MCF 10A (cell line): ENCODE measurements at regions of chr5 and their contacts with region 1.

Region 1: GRCh38 chr5:178786859-178787760 is 56.7 kb upstream of the ZNF354A start:
- DNase-seq: peak; percentile 96
- H3K4me3 Mint-ChIP-seq: peak overlapping the region; percentile 54
- H3K27ac Mint-ChIP-seq: peak overlapping the region; percentile 92
- H3K4me1 Mint-ChIP-seq: peaks cover 58% of the 10 kb centered on the region
- H3K27me3 Mint-ChIP-seq: no peaks in the 10 kb centered on the region
- CTCF ChIP-seq: peak; percentile 31

Region 2: GRCh38 chr5:178232124-178232919 is 554.8 kb before region 1 on chr5 and contains the start of gene PHYKPL:
- CTCF ChIA-PET with region 1: interaction called, 4 read pairs
- POLR2A ChIA-PET with region 1: no interaction called
- intact Hi-C with region 1: loop called (anchors 5 kb)
- DNase-seq: peak; percentile 84
- H3K4me3 Mint-ChIP-seq: peak within 1 kb of the TSS; percentile 80
- H3K27ac Mint-ChIP-seq: peak within 1 kb of the TSS; percentile 84
- H3K4me1 Mint-ChIP-seq: peaks cover 57% of the 10 kb centered on the region
- H3K27me3 Mint-ChIP-seq: no peaks in the 10 kb centered on the region
- CTCF ChIP-seq: no peak
- total RNA-seq, gene PHYKPL: 112 and 115 TPM in 2 replicates

Region 3: GRCh38 chr5:178677429-178677828 is 109.7 kb before region 1 on chr5:
- CTCF ChIA-PET with region 1: interaction called, 3 read pairs
- POLR2A ChIA-PET with region 1: interaction called, 10 read pairs
- intact Hi-C with region 1: no loop called
- DNase-seq: no peak
- H3K4me3 Mint-ChIP-seq: no peak overlapping the region
- H3K27ac Mint-ChIP-seq: peak overlapping the region; percentile 81
- H3K4me1 Mint-ChIP-seq: peaks cover 33% of the 10 kb centered on the region
- H3K27me3 Mint-ChIP-seq: no peaks in the 10 kb centered on the region
- CTCF ChIP-seq: no peak

Region 4: GRCh38 chr5:178739452-178740193 is 47.5 kb before region 1 on chr5:
- CTCF ChIA-PET with region 1: interaction called, 6 read pairs
- POLR2A ChIA-PET with region 1: interaction called, 9 read pairs
- intact Hi-C with region 1: loop called (anchors 2 kb)
- DNase-seq: peak; percentile 25
- H3K4me3 Mint-ChIP-seq: no peak overlapping the region
- H3K27ac Mint-ChIP-seq: no peak overlapping the region
- H3K4me1 Mint-ChIP-seq: peaks cover 25% of the 10 kb centered on the region
- H3K27me3 Mint-ChIP-seq: no peaks in the 10 kb centered on the region
- CTCF ChIP-seq: no peak

Region 5: DNA sequence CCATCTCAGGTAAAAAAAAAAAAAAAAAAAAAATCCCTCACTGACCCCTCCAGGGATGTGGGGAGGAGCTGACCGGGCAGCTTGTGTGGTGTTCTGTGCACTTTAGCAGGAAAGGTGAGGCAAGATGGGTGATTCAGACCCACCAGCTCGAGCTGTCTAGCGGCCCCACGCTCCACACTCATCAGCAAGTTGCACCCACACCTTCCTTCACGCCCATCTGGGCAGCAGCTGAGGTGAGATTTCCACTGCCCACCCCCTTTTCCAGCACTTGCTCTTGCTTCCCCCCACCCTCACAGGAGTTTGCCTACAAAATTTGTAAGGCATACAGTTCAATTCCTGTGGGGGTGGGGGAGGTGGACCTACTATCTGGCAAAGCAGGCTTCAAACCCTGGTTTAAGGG is 13.9 kb after region 1 on chr5:
- CTCF ChIA-PET with region 1: interaction called, 4 read pairs
- POLR2A ChIA-PET with region 1: interaction called, 15 read pairs
- intact Hi-C with region 1: no loop called
- DNase-seq: no peak
- H3K4me3 Mint-ChIP-seq: no peak overlapping the region
- H3K27ac Mint-ChIP-seq: no peak overlapping the region
- H3K4me1 Mint-ChIP-seq: no peaks in the 10 kb centered on the region
- H3K27me3 Mint-ChIP-seq: no peaks in the 10 kb centered on the region
- CTCF ChIP-seq: no peak

Region 6: DNA sequence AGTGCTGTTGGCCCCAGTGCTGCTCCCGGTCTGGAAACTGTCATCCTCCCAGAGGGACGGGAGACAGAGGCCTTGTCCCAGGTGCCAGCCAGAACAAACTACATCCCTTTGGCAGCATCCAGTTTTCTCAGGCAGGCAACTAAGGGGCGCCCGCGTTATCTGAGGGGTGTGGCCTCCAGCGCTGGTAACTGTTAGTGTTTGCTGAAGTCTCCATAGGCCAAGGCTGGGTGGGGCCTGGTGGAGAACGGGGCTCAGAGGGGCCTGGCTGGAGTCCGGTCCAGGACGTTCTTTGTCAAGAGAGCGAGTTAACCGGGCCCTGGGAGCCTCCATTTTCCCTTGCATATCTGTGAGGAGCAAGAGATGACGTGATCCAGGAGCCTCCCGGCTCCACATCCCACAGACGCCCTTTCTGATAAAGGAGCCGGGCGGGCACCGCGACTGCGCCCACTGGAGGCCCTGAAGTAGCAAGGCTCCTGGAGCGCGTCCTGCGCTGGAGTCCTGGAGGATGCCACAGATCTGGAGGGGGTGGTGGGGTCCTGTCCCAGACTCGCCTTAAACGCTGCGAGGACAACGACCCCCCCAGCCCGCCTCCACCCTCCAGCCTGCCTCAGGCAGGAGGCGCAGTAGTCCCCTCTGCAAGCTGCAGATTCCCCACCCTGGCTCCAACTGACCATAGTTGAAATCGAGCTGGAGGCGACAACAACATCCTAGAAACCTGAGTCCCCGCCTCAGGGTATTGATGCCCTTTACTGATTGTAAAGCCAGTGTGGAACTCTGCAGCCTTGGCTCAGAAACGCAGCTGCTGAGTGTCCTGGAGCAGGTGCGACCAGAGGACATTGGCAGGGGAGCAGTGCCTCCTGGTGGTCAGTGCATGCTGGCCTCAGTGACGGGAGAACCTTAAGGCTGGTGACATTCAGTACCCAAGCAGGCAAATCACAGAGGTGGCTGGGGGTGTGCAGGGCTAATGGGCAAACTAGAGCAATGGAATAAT is 51.9 kb after region 1 on chr5:
- CTCF ChIA-PET with region 1: interaction called, 8 read pairs
- POLR2A ChIA-PET with region 1: interaction called, 19 read pairs
- intact Hi-C with region 1: loop called (anchors 5 kb)
- DNase-seq: peak; percentile 75
- H3K4me3 Mint-ChIP-seq: no peak overlapping the region
- H3K27ac Mint-ChIP-seq: no peak overlapping the region
- H3K4me1 Mint-ChIP-seq: peaks cover 5% of the 10 kb centered on the region
- H3K27me3 Mint-ChIP-seq: no peaks in the 10 kb centered on the region
- CTCF ChIP-seq: peak; percentile 93

Region 7: GRCh38 chr5:179284751-179285631 is 497.9 kb after region 1 on chr5:
- CTCF ChIA-PET with region 1: no interaction called
- POLR2A ChIA-PET with region 1: no interaction called
- intact Hi-C with region 1: no loop called
- DNase-seq: no peak
- H3K4me3 Mint-ChIP-seq: no peak overlapping the region
- H3K27ac Mint-ChIP-seq: no peak overlapping the region
- H3K4me1 Mint-ChIP-seq: no peaks in the 10 kb centered on the region
- H3K27me3 Mint-ChIP-seq: no peaks in the 10 kb centered on the region
- CTCF ChIP-seq: no peak